ENCODE measurements at regions of chr20 and their contacts with region 1.

Region 1: GRCh38 chr20:3795511-3796468 is at the start of gene CDC25B:
- DNase-seq: peak; percentile 96 to 97
- ATAC-seq: peak; percentile 88 to 91
- H3K4me3 ChIP-seq: peak within 1 kb of the TSS; percentile 84
- H3K27ac ChIP-seq: peak within 1 kb of the TSS; percentile 98 to 99
- H3K4me1 ChIP-seq: peaks cover 36% of the 10 kb centered on the region
- CTCF ChIP-seq: peak; percentile 37; the same call in 2 of the 3 replicates
- EP300 ChIP-seq: no peak
- POLR2A ChIP-seq: peak; percentile 89
- RAD21 ChIP-seq: peak; percentile 38 to 51; a peak in 4 of 5 replicates
- polyA plus RNA-seq, gene CDC25B: 133 and 136 TPM in 2 replicates

Region 2: GRCh38 chr20:3811467-3812258 is 15.9 kb after region 1 on chr20:
- CTCF ChIA-PET with region 1: no interaction called
- POLR2A ChIA-PET with region 1: interaction called, 36 read pairs
- DNase-seq: peak; percentile 97 to 100
- ATAC-seq: peak; percentile 54 to 63
- H3K4me3 ChIP-seq: peak overlapping the region; percentile 37
- H3K27ac ChIP-seq: peak overlapping the region; percentile 95 to 99
- H3K4me1 ChIP-seq: peaks cover 65% of the 10 kb centered on the region
- CTCF ChIP-seq: no peak
- EP300 ChIP-seq: peak; percentile 93 to 98
- POLR2A ChIP-seq: peak; percentile 19
- RAD21 ChIP-seq: peak; percentile 23 to 58

Region 3: GRCh38 chr20:3970016-3970415 is 174.2 kb after region 1 on chr20:
- CTCF ChIA-PET with region 1: no interaction called
- POLR2A ChIA-PET with region 1: no interaction called
- DNase-seq: no peak
- ATAC-seq: no peak
- H3K4me3 ChIP-seq: no peak overlapping the region
- H3K27ac ChIP-seq: no peak overlapping the region
- H3K4me1 ChIP-seq: no peaks in the 10 kb centered on the region
- CTCF ChIP-seq: no peak
- EP300 ChIP-seq: no peak
- POLR2A ChIP-seq: no peak
- RAD21 ChIP-seq: no peak

Measured in A549 (cell line).